Body of pancreas (tissue), 4 donors: ENCODE measurements at regions of chr10 and their contacts with region 1.

Region 1: DNA sequence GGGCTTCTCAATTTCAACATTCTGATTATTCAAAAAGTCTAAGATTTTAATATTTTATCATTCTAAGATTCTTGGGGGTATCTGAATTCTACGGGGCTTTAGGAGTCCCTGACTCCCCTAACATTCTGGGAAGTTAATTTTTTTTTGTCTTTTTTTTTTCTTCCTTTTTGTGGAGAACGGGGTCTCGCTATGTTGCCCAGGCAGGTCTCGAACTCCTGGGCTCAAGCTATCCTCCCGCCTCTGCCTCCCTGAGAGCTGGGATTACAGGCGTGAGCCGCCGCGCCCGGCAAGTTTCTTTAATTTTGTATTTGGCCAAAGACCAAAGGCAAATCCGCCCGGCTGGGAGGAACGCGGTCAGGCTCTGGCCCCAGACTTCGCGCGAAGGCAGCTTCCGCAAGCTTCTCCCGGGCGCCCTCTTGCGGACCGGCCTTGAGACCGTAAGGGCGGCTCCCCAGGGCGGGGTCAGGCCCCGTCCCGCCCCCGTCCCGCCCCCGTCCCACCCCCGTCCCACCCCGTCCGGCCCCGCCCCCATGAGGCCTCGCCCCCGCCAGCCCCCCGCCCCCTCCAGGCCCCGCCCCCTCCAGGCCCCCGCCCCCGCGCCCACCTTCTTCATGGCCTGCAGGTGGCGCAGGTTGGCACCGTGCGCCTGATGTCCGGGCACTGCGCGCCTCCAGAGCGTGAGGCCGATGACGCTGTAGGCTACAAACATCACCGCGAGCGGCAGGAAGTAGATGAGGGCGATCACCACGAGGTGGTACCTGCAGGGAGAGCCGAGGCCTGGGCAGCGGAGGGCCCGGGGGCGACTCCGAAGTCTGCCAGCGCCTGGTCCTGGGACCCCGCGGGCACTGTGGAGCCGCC is 8.2 kb downstream of the TACR2 start:
- DNase-seq: peak; percentile 95 to 97 (median 96)
- ATAC-seq: peak; percentile 93
- H3K4me3 ChIP-seq: no peak overlapping the region
- H3K27ac ChIP-seq: peak overlapping the region; percentile 55 to 94 (median 88)
- H3K4me1 ChIP-seq: peaks cover 13% of the 10 kb centered on the region
- H3K27me3 ChIP-seq: no peaks in the 10 kb centered on the region
- CTCF ChIP-seq: peak; percentile 54 to 89 (median 73)
- POLR2A ChIP-seq: peak; percentile 13 to 69 (median 62)

Region 2: DNA sequence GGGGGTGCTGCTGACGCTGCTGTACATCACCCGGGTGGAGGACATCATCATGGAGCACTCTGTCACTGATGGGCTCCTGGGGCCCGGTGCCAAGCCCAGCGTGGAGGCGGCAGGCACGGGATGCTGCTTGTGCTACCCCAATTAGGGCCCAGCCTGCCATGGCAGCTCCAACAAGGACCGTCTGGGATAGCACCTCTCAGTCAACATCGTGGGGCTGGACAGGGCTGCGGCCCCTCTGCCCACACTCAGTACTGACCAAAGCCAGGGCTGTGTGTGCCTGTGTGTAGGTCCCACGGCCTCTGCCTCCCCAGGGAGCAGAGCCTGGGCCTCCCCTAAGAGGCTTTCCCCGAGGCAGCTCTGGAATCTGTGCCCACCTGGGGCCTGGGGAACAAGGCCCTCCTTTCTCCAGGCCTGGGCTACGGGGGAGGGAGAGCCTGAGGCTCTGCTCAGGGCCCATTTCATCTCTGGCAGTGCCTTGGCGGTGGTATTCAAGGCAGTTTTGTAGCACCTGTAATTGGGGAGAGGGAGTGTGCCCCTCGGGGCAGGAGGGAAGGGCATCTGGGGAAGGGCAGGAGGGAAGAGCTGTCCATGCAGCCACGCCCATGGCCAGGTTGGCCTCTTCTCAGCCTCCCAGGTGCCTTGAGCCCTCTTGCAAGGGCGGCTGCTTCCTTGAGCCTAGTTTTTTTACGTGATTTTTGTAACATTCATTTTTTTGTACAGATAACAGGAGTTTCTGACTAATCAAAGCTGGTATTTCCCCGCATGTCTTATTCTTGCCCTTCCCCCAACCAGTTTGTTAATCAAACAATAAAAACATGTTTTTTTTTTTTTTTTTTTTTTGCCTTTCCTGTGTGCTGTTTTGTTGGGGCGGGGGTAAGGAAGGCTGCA is 98.5 kb after region 1 on chr10:
- intact Hi-C with region 1: loop called (anchors 5 kb)
- DNase-seq: no peak
- ATAC-seq: peak; percentile 10
- H3K4me3 ChIP-seq: no peak overlapping the region
- H3K27ac ChIP-seq: peak overlapping the region in 3 of 4 donors; percentile 7 to 59 (median 53)
- H3K4me1 ChIP-seq: peaks cover 10% of the 10 kb centered on the region
- H3K27me3 ChIP-seq: no peaks in the 10 kb centered on the region
- CTCF ChIP-seq: no peak
- POLR2A ChIP-seq: no peak

Region 3: GRCh38 chr10:69766161-69766910 is 357.8 kb after region 1 on chr10:
- intact Hi-C with region 1: no loop called
- DNase-seq: no peak
- ATAC-seq: no peak
- H3K4me3 ChIP-seq: no peak overlapping the region
- H3K27ac ChIP-seq: no peak overlapping the region
- H3K4me1 ChIP-seq: peaks cover 13% of the 10 kb centered on the region
- H3K27me3 ChIP-seq: no peaks in the 10 kb centered on the region
- CTCF ChIP-seq: no peak
- POLR2A ChIP-seq: no peak